ENCODE measurements at regions of chr14 and their contacts with region 1.

Region 1: DNA sequence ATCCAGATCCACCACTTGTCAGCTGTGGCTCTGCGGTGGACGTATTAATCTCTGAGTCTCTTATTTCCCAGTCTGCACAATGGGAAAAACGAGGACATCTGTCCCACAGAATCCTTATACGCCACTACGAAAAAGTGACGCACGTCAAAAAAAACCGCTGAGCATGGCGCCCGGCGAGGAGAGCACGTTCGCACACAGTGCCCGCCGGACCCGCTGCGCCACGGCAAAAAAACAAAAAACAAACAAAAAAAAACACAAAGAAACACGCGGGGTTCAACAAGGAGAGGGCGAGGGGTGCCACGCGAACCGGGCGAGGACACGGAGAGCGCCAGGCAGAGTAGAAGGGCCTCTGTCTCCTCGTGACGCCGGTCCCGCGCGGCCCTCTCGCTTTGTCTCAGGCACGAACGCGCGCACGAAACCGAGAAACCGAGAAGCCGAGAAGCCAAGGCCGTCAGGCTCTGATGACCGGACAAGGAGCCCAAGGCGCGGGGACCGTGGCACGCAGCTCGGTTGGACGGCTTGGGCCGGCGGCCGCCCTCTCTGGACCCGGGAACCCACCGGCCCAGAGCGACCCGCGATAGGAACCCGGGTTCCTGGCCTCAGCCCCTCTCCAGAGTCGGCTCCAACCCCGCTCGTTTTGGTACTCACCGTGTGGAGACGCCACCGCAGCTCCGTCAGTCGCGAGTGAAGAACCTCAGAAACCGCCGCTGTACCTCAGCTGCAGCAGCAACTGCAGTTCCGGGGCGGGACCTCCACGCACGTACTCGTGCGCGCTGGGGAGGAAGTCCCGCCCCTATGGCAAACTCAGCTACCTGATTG is at the start of gene DDX24:
- DNase-seq: peak; percentile 96

Region 2: GRCh38 chr14:94051115-94051514 is 29.6 kb before region 1 on chr14:
- CTCF ChIA-PET with region 1: no interaction called
- POLR2A ChIA-PET with region 1: interaction called, 13 read pairs
- DNase-seq: peak; percentile 30

Measured in HEK293T (cell line).